ENCODE measurements at regions of chr6 and their contacts with region 1.

Region 1: GRCh38 chr6:161273752-161274487 is at the start of gene AGPAT4:
- DNase-seq: peak; percentile 74
- H3K4me3 Mint-ChIP-seq: peak within 1 kb of the TSS; percentile 73
- H3K27ac Mint-ChIP-seq: peak within 1 kb of the TSS; percentile 78
- H3K4me1 Mint-ChIP-seq: peaks cover 33% of the 10 kb centered on the region
- H3K27me3 Mint-ChIP-seq: peaks cover 11% of the 10 kb centered on the region
- total RNA-seq, gene AGPAT4: 13.9 to 14.3 TPM

Region 2: GRCh38 chr6:161226009-161226964 is 47.6 kb before region 1 on chr6:
- CTCF ChIA-PET with region 1: interaction called, 12 read pairs
- POLR2A ChIA-PET with region 1: interaction called, 30 read pairs
- DNase-seq: peak; percentile 62
- H3K4me3 Mint-ChIP-seq: peak overlapping the region; percentile 49
- H3K27ac Mint-ChIP-seq: peak overlapping the region; percentile 95
- H3K4me1 Mint-ChIP-seq: peaks cover 66% of the 10 kb centered on the region
- H3K27me3 Mint-ChIP-seq: no peaks in the 10 kb centered on the region

Region 3: DNA sequence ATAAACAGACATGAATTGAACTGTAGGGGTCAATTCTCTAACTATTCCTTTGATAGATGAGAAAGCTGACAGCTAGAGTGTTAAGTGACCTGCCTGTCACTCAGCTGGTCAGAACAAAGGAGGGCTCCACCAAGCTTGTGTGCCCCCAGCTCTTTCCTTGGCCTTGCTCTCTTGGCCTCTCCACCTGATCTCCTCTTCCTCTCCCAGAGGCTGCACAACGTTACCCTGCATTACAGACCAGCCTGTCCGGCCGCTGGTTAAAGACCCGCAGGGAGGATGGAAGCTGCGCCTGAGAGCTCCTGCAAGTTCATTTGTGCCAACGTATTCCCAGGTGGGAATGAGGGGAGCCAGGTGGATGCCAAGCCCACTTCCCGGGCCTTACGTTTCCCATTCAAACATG is 22.6 kb before region 1 on chr6:
- CTCF ChIA-PET with region 1: no interaction called
- POLR2A ChIA-PET with region 1: interaction called, 11 read pairs
- DNase-seq: no peak
- H3K4me3 Mint-ChIP-seq: no peak overlapping the region
- H3K27ac Mint-ChIP-seq: no peak overlapping the region
- H3K4me1 Mint-ChIP-seq: peaks cover 2% of the 10 kb centered on the region
- H3K27me3 Mint-ChIP-seq: no peaks in the 10 kb centered on the region